HCT116 (cell line): ENCODE measurements at regions of chr5 and their contacts with region 1.

Region 1: GRCh38 chr5:58891096-58891970 is 308.5 kb downstream of the RAB3C start:
- DNase-seq: peak; percentile 33
- ATAC-seq: peak; percentile 79
- H3K4me3 ChIP-seq: no peak overlapping the region
- H3K27ac ChIP-seq: no peak overlapping the region
- H3K4me1 ChIP-seq: no peaks in the 10 kb centered on the region
- H3K27me3 ChIP-seq: no peaks in the 10 kb centered on the region
- CTCF ChIP-seq: peak; percentile 51 to 76 (median 64); a peak in 5 of 6 replicates
- POLR2A ChIP-seq: no peak
- RAD21 ChIP-seq: peak; percentile 46

Region 2: GRCh38 chr5:58775701-58776262 is 115.6 kb before region 1 on chr5:
- CTCF ChIA-PET with region 1: no interaction called
- POLR2A ChIA-PET with region 1: no interaction called
- RAD21 ChIA-PET with region 1: no interaction called
- intact Hi-C with region 1: no loop called
- DNase-seq: no peak
- ATAC-seq: no peak
- H3K4me3 ChIP-seq: no peak overlapping the region
- H3K27ac ChIP-seq: no peak overlapping the region
- H3K4me1 ChIP-seq: no peaks in the 10 kb centered on the region
- H3K27me3 ChIP-seq: peaks cover 23% of the 10 kb centered on the region
- CTCF ChIP-seq: no peak
- POLR2A ChIP-seq: no peak
- RAD21 ChIP-seq: no peak

Region 3: GRCh38 chr5:59007460-59008063 is 116.2 kb after region 1 on chr5:
- CTCF ChIA-PET with region 1: interaction called, 17 read pairs
- POLR2A ChIA-PET with region 1: no interaction called
- RAD21 ChIA-PET with region 1: interaction called in 1 of 2 experiments, 4 read pairs
- intact Hi-C with region 1: loop called (anchors 1 kb)
- DNase-seq: peak; percentile 10
- ATAC-seq: no peak
- H3K4me3 ChIP-seq: no peak overlapping the region
- H3K27ac ChIP-seq: no peak overlapping the region
- H3K4me1 ChIP-seq: no peaks in the 10 kb centered on the region
- H3K27me3 ChIP-seq: peaks cover 5% of the 10 kb centered on the region
- CTCF ChIP-seq: peak; percentile 32 to 53 (median 52); a peak in 4 of 6 replicates
- POLR2A ChIP-seq: no peak
- RAD21 ChIP-seq: peak; percentile 71

Region 4: GRCh38 chr5:59174248-59174844 is 283.0 kb after region 1 on chr5:
- CTCF ChIA-PET with region 1: interaction called, 13 read pairs
- POLR2A ChIA-PET with region 1: no interaction called
- RAD21 ChIA-PET with region 1: no interaction called
- intact Hi-C with region 1: loop called (anchors 1 kb)
- DNase-seq: peak; percentile 47
- ATAC-seq: peak; percentile 84
- H3K4me3 ChIP-seq: no peak overlapping the region
- H3K27ac ChIP-seq: no peak overlapping the region
- H3K4me1 ChIP-seq: no peaks in the 10 kb centered on the region
- H3K27me3 ChIP-seq: no peaks in the 10 kb centered on the region
- CTCF ChIP-seq: peak; percentile 56 to 87 (median 85); a peak in 5 of 6 replicates
- POLR2A ChIP-seq: no peak
- RAD21 ChIP-seq: peak; percentile 72

Region 5: DNA sequence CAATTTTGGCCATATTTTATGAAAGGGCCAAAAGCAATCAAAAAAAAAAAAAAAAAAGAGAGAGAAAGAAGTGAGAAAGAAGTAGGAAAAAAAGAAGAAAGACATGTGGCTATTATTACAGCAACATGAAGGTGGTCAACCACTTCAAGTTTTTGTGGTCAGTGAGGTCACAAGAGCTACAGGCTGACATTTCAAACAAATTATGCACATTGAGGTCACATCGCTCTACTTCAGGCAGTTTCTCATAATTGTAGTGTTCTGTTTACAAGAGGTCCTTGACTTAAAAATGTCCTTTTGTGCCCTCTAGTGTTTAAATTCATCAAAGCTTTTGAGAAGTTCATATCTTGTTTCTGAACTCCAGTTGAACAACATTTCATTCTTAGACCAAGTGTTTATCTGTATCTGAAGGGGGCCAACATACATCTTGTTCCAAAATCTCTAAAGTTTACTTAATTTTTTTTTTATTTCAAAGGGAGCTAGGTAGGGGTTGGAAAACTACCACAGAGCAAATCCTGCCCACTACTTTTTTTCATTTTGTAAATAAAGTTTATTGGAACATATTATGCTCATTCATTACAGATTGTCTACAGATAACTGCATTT is 489.1 kb after region 1 on chr5:
- CTCF ChIA-PET with region 1: no interaction called
- POLR2A ChIA-PET with region 1: no interaction called
- RAD21 ChIA-PET with region 1: no interaction called
- intact Hi-C with region 1: no loop called
- DNase-seq: peak; percentile 37
- ATAC-seq: peak; percentile 47; the same call in 1 of the 2 replicates
- H3K4me3 ChIP-seq: no peak overlapping the region
- H3K27ac ChIP-seq: no peak overlapping the region
- H3K4me1 ChIP-seq: no peaks in the 10 kb centered on the region
- H3K27me3 ChIP-seq: no peaks in the 10 kb centered on the region
- CTCF ChIP-seq: peak; percentile 25 to 54 (median 47); a peak in 4 of 6 replicates
- POLR2A ChIP-seq: no peak
- RAD21 ChIP-seq: peak; percentile 50

Region 6: DNA sequence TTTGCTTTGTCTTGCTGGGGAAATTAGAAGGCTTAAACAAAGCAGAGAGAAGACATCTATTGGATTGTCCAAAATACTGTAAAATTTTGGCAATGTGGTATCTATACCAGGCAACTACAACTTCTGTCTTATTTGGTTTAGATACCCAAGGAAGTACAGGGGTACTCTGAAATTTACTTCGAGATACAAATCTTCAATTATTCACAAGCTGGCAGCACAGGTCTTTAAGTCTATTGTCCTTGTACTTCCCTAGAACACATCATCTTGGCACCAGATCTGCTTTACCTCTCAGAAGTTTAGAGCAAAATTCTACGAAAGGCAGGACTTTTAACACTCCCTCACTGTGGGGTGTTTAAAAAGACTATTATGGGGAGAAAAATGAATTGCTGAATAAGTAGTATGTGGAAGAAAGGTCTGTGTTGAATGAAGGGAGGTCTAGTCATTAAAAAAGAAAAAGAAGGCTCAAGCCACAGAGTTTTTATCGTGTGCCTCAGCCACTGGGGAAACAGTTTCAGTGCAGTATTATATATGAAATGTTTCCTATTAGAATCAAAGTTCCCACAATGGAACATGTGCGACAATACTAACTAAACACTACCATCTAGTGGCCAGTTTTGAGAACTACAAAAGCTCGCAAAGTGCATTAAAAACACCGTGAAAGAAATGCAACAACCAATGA is 908.5 kb after region 1 on chr5:
- CTCF ChIA-PET with region 1: no interaction called
- POLR2A ChIA-PET with region 1: no interaction called
- RAD21 ChIA-PET with region 1: no interaction called
- intact Hi-C with region 1: loop called (anchors 10 kb)
- DNase-seq: peak; percentile 37
- ATAC-seq: peak; percentile 74
- H3K4me3 ChIP-seq: no peak overlapping the region
- H3K27ac ChIP-seq: no peak overlapping the region
- H3K4me1 ChIP-seq: no peaks in the 10 kb centered on the region
- H3K27me3 ChIP-seq: no peaks in the 10 kb centered on the region; the same call in none of the 2 replicates
- CTCF ChIP-seq: peak; percentile 50 to 77 (median 54); a peak in 5 of 6 replicates
- POLR2A ChIP-seq: no peak
- RAD21 ChIP-seq: peak; percentile 72